IMR-90 (cell line): ENCODE measurements at regions of chr1 and their contacts with region 1.

Region 1: DNA sequence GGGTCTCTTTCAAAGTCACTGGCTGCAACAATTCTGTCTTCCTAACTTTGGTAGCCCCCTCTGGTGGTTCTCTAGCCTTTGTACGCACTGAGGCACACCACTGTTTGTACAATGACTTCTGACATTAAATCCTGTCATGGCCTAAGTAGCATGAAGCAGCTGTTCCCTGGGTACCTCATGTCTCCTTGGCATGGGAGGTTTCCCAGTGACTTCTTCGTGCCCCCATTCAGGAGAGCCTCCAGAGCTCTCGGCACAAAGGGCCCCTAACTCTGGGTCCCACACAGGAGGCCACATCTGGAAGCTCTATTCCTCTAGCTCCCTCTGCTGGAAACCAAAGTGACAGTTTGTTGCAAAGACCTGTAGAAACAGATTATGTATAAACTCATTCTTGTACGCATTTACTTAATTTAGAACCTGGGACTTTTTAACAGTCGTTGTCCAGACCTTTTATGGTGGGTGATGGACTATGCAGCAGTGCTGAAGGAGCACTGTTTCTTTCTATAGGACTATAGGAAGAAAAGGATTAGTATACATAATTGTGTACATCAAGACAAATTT is 13.4 kb downstream of the SWT1 start:
- DNase-seq: peak; percentile 67
- ATAC-seq: peak; percentile 90
- H3K4me3 ChIP-seq: no peak overlapping the region
- H3K27ac ChIP-seq: no peak overlapping the region
- H3K4me1 ChIP-seq: no peaks in the 10 kb centered on the region; the same call in 1 of the 2 replicates
- H3K27me3 ChIP-seq: no peaks in the 10 kb centered on the region
- CTCF ChIP-seq: peak; percentile 56
- POLR2A ChIP-seq: no peak
- RAD21 ChIP-seq: peak; percentile 68

Region 2: GRCh38 chr1:184805667-184806295 is 364.6 kb before region 1 on chr1:
- CTCF ChIA-PET with region 1: interaction called, 9 read pairs
- POLR2A ChIA-PET with region 1: no interaction called
- dilution Hi-C with region 1: no loop called
- in situ Hi-C with region 1: loop called (anchors 10 kb)
- intact Hi-C with region 1: loop called (anchors 1 kb)
- DNase-seq: peak; percentile 83
- ATAC-seq: peak; percentile 89
- H3K4me3 ChIP-seq: no peak overlapping the region
- H3K27ac ChIP-seq: no peak overlapping the region
- H3K4me1 ChIP-seq: peaks cover 7% of the 10 kb centered on the region
- H3K27me3 ChIP-seq: no peaks in the 10 kb centered on the region
- CTCF ChIP-seq: peak; percentile 96
- POLR2A ChIP-seq: 0 out of 2 replicates have a peak, but pooled peaks have one; percentile 50
- RAD21 ChIP-seq: peak; percentile 99

Region 3: GRCh38 chr1:185044981-185045813 is 125.2 kb before region 1 on chr1 and contains the start of gene RNF2:
- CTCF ChIA-PET with region 1: interaction called, 3 read pairs
- POLR2A ChIA-PET with region 1: no interaction called
- dilution Hi-C with region 1: no loop called
- in situ Hi-C with region 1: no loop called
- intact Hi-C with region 1: loop called (anchors 5 kb)
- DNase-seq: peak; percentile 71
- ATAC-seq: peak; percentile 96
- H3K4me3 ChIP-seq: peak within 1 kb of the TSS; percentile 96
- H3K27ac ChIP-seq: peak within 1 kb of the TSS; percentile 72
- H3K4me1 ChIP-seq: peaks cover 3% of the 10 kb centered on the region
- H3K27me3 ChIP-seq: no peaks in the 10 kb centered on the region
- CTCF ChIP-seq: no peak
- POLR2A ChIP-seq: no peak
- RAD21 ChIP-seq: no peak
- total RNA-seq, gene RNF2: 39.7 and 48.8 TPM in 2 replicates